AG04450 (cell line): ENCODE measurements at regions of chrX and their contacts with region 1.

Region 1: GRCh38 chrX:136162831-136163570 is 15.7 kb downstream of the FHL1 start:
- DNase-seq: no peak
- H3K4me3 ChIP-seq: no peak overlapping the region
- H3K27ac ChIP-seq: no peak overlapping the region
- H3K27me3 ChIP-seq: no peaks in the 10 kb centered on the region
- CTCF ChIP-seq: peak; percentile 77

Region 2: DNA sequence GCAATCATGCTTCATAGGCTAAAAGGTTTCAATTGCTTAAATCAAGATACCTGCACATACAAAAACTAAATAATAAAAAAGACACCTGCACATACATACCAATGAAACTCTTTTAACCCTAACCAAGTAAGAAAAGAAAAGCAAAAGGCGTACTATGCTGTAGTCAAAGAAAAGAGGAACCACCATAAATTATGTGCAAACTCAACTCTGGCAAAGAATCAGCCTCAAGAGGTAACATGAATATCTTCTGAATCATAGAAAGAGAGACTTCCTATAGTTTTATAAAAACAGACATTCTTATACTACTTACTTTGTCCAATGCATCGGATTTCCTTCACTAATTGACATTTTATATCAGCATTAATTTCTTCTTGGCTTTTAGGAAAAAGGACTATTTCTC is 218.5 kb before region 1 on chrX:
- CTCF ChIA-PET with region 1: no interaction called
- POLR2A ChIA-PET with region 1: no interaction called
- DNase-seq: no peak
- H3K4me3 ChIP-seq: no peak overlapping the region
- H3K27ac ChIP-seq: no peak overlapping the region
- H3K27me3 ChIP-seq: no peaks in the 10 kb centered on the region
- CTCF ChIP-seq: no peak

Region 3: GRCh38 chrX:136034668-136035067 is 128.3 kb before region 1 on chrX:
- CTCF ChIA-PET with region 1: interaction called, 93 read pairs
- POLR2A ChIA-PET with region 1: interaction called, 4 read pairs
- DNase-seq: no peak
- H3K4me3 ChIP-seq: no peak overlapping the region
- H3K27ac ChIP-seq: no peak overlapping the region
- H3K27me3 ChIP-seq: no peaks in the 10 kb centered on the region
- CTCF ChIP-seq: no peak